ENCODE measurements at regions of chr2 and their contacts with region 1.

Region 1: DNA sequence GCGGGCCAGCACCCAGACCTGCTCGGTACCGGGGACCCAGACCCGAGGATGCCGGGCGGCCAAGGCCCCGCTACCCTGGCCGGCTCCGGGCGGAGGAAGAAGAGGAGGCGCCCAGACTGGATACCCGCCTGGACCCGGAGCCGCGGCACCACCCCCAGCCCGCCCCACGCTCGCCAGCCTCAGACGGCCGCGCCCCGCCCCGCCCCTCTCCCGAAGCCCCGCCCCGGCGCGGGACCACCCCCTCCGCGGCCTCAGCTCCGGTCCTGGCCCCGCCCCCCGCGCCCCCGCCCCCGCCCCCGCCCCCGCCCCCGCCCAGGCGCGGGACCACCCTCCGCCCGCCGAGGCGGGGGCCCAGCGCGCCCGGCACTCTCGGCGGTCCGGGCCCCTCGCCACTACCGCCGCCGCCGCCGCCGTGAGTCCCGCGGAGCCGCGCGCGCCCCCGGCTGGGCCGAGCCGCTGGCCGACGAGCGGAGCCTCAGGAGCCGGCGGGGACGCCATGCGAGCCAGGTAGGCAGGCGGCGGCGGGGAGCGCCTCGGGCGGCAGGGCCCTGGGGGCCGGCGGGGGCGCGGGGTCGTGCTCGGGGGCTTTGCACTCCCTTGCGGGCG is at the start of gene SH3BP4:
- DNase-seq: no peak
- H3K4me3 ChIP-seq: peak within 1 kb of the TSS; percentile 92
- CTCF ChIP-seq: no peak

Region 2: DNA sequence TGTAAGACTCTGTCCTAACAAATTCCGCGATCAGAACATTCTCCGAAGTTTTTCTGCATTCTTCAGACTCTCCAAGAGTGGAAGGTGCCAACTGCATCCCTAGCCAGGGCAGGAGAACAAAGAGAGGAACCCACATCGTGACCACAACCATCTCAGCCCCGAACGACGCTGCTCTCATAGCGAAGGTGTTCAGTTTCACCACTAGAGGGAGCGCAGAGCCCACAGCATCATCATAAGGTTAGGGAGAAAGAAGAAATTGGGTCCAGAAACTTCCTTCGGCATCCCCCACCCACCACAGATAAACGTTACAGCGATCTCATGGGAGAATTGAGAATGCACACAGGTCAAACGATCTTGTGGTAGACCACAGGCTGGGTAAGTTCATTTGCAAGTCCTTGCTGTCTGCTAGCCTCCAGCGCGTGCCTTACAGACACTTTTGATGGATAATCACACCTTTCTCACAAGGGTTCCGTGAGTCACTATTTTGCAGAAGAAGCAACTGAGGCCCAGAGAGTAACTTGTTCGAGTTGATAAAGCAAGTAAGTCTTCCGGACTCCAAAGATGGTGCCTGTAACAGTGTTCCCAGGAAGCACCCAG is 401.2 kb before region 1 on chr2:
- in situ Hi-C with region 1: loop called (anchors 25 kb)
- DNase-seq: peak; percentile 98
- H3K4me3 ChIP-seq: no peak overlapping the region
- CTCF ChIP-seq: peak; percentile 90

Region 3: GRCh38 chr2:234679741-234680687 is 271.8 kb before region 1 on chr2:
- in situ Hi-C with region 1: loop called (anchors 25 kb)
- DNase-seq: peak; percentile 96
- H3K4me3 ChIP-seq: no peak overlapping the region
- CTCF ChIP-seq: no peak

Region 4: GRCh38 chr2:235034265-235035118 is 82.7 kb after region 1 on chr2:
- in situ Hi-C with region 1: no loop called
- DNase-seq: no peak
- H3K4me3 ChIP-seq: no peak overlapping the region
- CTCF ChIP-seq: no peak